GM12878 (cell line): ENCODE measurements at regions of chr22 and their contacts with region 1.

Region 1: GRCh38 chr22:21612865-21613265 is 17.0 kb downstream of the YDJC start:
- DNase-seq: no peak
- ATAC-seq: no peak
- H3K4me3 ChIP-seq: no peak overlapping the region
- H3K27ac ChIP-seq: no peak overlapping the region
- H3K4me1 ChIP-seq: no peaks in the 10 kb centered on the region
- H3K27me3 ChIP-seq: no peaks in the 10 kb centered on the region
- CTCF ChIP-seq: no peak
- EP300 ChIP-seq: no peak
- POLR2A ChIP-seq: no peak
- RAD21 ChIP-seq: no peak

Region 2: DNA sequence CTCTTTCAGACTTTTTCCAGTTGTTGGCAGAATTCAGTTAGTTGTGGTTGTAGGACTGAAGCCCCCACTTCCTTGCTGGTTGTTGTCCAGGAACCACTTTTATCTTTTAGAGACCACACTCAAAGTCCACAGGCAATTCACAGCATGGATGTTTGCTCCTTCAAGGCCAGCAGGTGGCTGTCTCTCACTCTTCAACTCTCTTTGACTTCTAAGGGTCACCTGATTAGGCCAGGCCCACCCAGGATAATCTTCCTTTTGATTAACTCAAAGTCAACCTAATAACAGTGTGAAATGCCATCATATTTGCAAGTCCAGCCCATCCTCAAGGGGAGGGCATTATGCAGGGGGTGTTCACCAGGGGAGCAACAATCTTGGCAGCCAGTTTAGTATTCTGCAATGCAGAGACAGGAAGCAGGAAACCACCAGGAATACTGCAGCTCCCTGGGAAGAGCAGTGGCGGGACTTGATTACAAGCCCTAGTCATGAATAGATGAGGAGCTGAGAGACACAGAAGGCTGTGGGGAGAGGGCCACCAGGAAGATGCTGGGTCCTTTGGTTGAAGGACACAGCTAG is 514.7 kb before region 1 on chr22:
- CTCF ChIA-PET with region 1: no interaction called
- POLR2A ChIA-PET with region 1: no interaction called
- RAD21 ChIA-PET with region 1: no interaction called
- SMC1A ChIA-PET with region 1: no interaction called
- in situ Hi-C with region 1: loop called (anchors 10 kb)
- intact Hi-C with region 1: no loop called
- DNase-seq: no peak
- ATAC-seq: no peak; the same call in 2 of the 3 replicates
- H3K4me3 ChIP-seq: no peak overlapping the region
- H3K27ac ChIP-seq: no peak overlapping the region
- H3K4me1 ChIP-seq: no peaks in the 10 kb centered on the region
- H3K27me3 ChIP-seq: no peaks in the 10 kb centered on the region
- CTCF ChIP-seq: peak in 2 of 3 experiments; percentile 15 to 29; a peak in 2 of 6 replicates
- EP300 ChIP-seq: no peak
- POLR2A ChIP-seq: no peak
- RAD21 ChIP-seq: peak; percentile 19; the same call in 1 of the 2 replicates